Endothelial cell of umbilical vein (primary cell): ENCODE measurements at regions of chr1 and their contacts with region 1.

Region 1: GRCh38 chr1:147541672-147542568 is 619 bp downstream of the BCL9 start:
- DNase-seq: no peak
- H3K4me3 ChIP-seq: peak overlapping the region; percentile 46 to 85 (median 64)
- H3K27ac ChIP-seq: peak overlapping the region; percentile 75
- H3K4me1 ChIP-seq: peaks cover 19% of the 10 kb centered on the region
- H3K27me3 ChIP-seq: no peaks in the 10 kb centered on the region
- CTCF ChIP-seq: no peak
- POLR2A ChIP-seq: peak; percentile 48

Region 2: GRCh38 chr1:147599362-147600118 is 57.6 kb after region 1 on chr1:
- CTCF ChIA-PET with region 1: interaction called, 14 read pairs
- POLR2A ChIA-PET with region 1: interaction called, 20 read pairs
- dilution Hi-C with region 1: no loop called
- intact Hi-C with region 1: loop called (anchors 1 kb)
- DNase-seq: peak; percentile 98
- H3K4me3 ChIP-seq: peak overlapping the region; percentile 76 to 91 (median 78)
- H3K27ac ChIP-seq: no peak overlapping the region
- H3K4me1 ChIP-seq: peaks cover 13% of the 10 kb centered on the region
- H3K27me3 ChIP-seq: peaks cover 3 to 4% of the 10 kb centered on the region in 2 experiments
- CTCF ChIP-seq: no peak
- POLR2A ChIP-seq: no peak

Region 3: DNA sequence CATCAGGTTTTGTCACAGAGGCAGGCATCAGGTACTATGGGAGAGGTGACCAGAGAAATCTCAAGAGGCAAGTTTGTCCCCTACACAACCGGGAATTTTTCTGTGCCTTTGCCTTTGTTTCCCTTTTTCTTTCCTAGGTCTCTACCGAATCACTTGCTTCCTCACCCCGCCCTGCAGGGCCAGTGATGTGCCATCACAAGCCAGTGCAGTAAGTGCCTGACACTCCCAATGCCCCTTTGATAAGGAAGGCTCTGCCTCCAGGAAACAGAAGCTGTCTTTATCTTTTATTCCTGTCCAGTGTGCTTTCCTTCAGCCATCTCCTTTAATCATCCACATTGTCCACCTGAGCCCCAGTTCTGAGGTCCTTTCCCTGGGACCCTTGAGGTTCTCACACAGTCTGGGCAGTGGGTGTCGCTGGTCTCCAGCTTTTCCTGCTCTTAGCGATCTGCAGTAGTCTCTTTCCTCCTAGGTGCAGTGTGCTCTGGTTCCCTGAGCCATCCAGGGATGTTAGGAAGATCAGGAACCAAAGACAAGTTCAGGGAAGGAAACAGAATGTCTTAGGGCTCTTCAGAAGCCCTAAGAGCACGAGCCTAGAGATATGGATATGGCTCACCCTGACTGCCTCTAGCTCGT is 181.9 kb after region 1 on chr1:
- CTCF ChIA-PET with region 1: no interaction called
- POLR2A ChIA-PET with region 1: no interaction called
- dilution Hi-C with region 1: no loop called
- intact Hi-C with region 1: no loop called
- DNase-seq: peak; percentile 65
- H3K4me3 ChIP-seq: no peak overlapping the region
- H3K27ac ChIP-seq: no peak overlapping the region
- H3K4me1 ChIP-seq: no peaks in the 10 kb centered on the region
- H3K27me3 ChIP-seq: peaks cover 2 to 10% of the 10 kb centered on the region in 2 experiments
- CTCF ChIP-seq: peak; percentile 66 to 79
- POLR2A ChIP-seq: no peak